ENCODE measurements at regions of chr19 and their contacts with region 1.

Region 1: DNA sequence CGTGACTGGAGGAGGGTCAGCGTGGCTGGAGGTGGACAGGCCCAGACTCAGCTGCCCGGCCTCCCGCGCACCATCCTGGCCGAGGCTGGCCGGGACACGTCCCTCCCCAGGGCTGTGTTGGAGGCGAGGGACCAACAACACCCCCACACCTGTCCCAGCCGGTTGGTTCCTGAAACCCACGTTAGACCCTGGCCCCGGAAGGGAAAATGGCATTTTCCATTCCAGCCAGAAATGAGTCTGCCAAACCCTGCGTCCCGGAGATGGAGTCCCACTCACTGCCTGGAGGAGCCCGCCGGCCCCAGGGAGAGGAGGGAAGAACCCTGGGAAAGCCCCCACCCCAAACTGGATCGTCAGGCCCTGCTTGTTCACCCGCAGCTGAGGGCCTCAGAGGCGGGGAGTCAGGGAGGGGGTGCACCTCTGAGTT is 4.8 kb upstream of the WDR18 start:
- DNase-seq: no peak

Region 2: DNA sequence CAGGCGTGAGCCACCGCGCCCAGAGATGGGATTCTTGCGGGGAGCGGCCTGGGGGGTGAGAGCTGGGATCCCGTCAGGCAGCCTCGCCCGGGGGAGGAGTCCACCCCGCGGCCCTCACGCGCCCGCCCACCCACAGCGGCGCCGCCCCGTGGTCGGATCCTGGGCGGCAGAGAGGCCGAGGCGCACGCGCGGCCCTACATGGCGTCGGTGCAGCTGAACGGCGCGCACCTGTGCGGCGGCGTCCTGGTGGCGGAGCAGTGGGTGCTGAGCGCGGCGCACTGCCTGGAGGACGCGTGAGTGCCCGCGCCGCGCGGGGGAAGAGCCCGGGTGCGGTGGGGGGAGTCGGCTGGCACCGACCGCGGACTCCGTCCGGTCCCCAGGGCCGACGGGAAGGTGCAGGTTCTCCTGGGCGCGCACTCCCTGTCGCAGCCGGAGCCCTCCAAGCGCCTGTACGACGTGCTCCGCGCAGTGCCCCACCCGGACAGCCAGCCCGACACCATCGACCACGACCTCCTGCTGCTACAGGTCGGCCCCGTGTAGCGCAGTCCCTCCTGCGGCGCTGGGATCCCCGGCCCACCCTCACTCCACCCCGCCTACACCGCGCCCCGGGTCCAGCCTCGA is 118.7 kb before region 1 on chr19:
- intact Hi-C with region 1: loop called (anchors 2 kb)
- DNase-seq: peak in 3 of 42 donors; percentile 28 to 61 (median 49)

Region 3: DNA sequence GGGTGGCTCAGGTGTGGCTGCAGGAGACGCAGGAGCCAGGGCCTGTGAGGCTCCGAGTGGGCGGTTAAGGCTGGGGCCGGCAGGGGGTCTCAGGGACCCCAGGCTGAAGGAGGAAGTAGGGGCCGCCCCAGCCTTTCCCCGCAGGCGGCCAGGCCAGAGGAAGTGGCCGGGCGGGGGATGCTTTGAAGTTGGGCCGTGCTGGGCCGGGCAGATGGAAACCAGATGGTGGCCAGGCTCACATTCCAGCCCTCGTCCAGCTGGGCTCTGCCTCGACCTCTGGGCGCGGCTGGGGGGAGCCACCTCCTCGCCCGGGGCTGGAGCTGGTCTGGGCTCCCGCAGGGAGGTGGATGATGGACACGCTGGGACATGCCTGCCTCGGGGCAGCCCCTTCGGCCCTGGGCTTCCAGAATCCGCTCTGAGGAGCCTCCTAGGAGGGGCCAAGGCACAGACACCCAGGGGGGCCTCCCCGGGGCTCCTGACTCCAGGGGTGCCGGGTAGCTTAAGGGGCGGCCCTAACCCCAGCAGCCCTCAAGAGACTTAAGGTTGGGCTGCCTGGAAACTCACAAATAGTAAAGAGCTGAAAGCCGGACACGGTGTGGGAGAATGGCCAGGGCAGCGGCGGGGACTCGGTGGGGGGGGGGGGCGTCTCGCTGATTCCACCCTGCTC is 46.0 kb before region 1 on chr19:
- intact Hi-C with region 1: no loop called
- DNase-seq: peak in 4 of 42 donors; percentile 20 to 47 (median 34)

Measured in head of caudate nucleus (tissue), 42 donors.